K562 (cell line): ENCODE measurements at regions of chr6 and their contacts with region 1.

Region 1: GRCh38 chr6:20056350-20056992 is 155.8 kb downstream of the MBOAT1 start:
- DNase-seq: peak in 3 of 4 experiments; percentile 38 to 71 (median 58)
- ATAC-seq: peak; percentile 81
- H3K4me3 ChIP-seq: no peak overlapping the region
- H3K27ac ChIP-seq: no peak overlapping the region
- H3K4me1 ChIP-seq: no peaks in the 10 kb centered on the region
- H3K27me3 ChIP-seq: peaks cover 26 to 40% of the 10 kb centered on the region in 2 experiments
- CTCF ChIP-seq: peak; percentile 52 to 87 (median 67); a peak in 5 of 6 replicates
- EP300 ChIP-seq: no peak
- POLR2A ChIP-seq: no peak
- RAD21 ChIP-seq: peak; percentile 88 to 95

Region 2: DNA sequence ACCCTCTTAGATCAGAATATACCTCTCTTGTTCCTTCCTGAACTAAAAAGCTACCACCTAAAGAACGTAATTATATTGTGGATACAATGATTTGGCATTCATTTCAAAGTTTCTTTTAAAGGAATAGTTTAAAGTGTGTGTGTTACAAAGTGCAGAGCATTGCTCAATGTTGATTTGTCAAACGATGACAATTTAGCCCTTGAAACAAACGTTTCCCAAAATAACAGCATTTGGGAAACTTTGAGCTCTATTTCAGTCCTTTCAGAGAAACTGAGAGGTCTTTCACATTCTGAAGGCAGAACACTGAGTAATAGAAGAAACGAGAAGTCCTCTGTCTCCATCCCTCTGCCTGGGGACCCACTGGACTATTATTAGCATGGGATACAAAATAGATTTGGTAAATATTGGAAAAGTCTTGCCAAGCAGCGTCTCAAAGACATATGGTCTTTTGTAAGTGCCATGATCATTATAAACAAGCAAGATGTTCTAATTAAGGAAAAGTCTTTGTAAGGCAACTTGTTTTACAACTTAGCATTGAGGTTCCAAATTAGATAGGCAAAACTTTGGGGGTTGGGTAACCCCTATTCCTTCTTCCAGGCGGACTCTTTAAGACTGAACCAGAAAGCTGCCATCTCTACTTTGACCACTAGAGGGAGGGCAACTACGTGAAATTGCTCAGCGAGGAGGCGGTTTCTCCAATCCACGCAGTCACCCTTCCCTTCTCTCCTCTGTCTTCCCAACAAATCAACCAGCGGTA is 1460.5 kb before region 1 on chr6:
- CTCF ChIA-PET with region 1: interaction called, 12 read pairs
- POLR2A ChIA-PET with region 1: no interaction called
- in situ Hi-C with region 1: no loop called
- intact Hi-C with region 1: loop called (anchors 1 kb)
- DNase-seq: peak; percentile 64 to 76 (median 72)
- ATAC-seq: peak; percentile 98
- H3K4me3 ChIP-seq: no peak overlapping the region
- H3K27ac ChIP-seq: no peak overlapping the region
- H3K4me1 ChIP-seq: no peaks in the 10 kb centered on the region
- H3K27me3 ChIP-seq: no peaks in the 10 kb centered on the region
- CTCF ChIP-seq: peak; percentile 77 to 93 (median 92)
- EP300 ChIP-seq: no peak
- POLR2A ChIP-seq: no peak
- RAD21 ChIP-seq: peak; percentile 86 to 91

Region 3: GRCh38 chr6:18823782-18824386 is 1232.6 kb before region 1 on chr6:
- CTCF ChIA-PET with region 1: no interaction called
- POLR2A ChIA-PET with region 1: no interaction called
- in situ Hi-C with region 1: no loop called
- intact Hi-C with region 1: loop called (anchors 10 kb)
- DNase-seq: peak; percentile 37 to 84 (median 59)
- ATAC-seq: peak; percentile 74
- H3K4me3 ChIP-seq: no peak overlapping the region
- H3K27ac ChIP-seq: no peak overlapping the region
- H3K4me1 ChIP-seq: no peaks in the 10 kb centered on the region
- H3K27me3 ChIP-seq: no peaks in the 10 kb centered on the region
- CTCF ChIP-seq: peak; percentile 68 to 76 (median 73)
- EP300 ChIP-seq: no peak
- POLR2A ChIP-seq: no peak
- RAD21 ChIP-seq: peak; percentile 42 to 72

Region 4: GRCh38 chr6:19812512-19813119 is 243.9 kb before region 1 on chr6:
- CTCF ChIA-PET with region 1: no interaction called
- POLR2A ChIA-PET with region 1: no interaction called
- in situ Hi-C with region 1: no loop called
- intact Hi-C with region 1: loop called (anchors 5 kb)
- DNase-seq: peak; percentile 31 to 41 (median 34)
- ATAC-seq: peak; percentile 91
- H3K4me3 ChIP-seq: no peak overlapping the region
- H3K27ac ChIP-seq: no peak overlapping the region
- H3K4me1 ChIP-seq: no peaks in the 10 kb centered on the region
- H3K27me3 ChIP-seq: peaks cover 3 to 6% of the 10 kb centered on the region in 2 experiments; a peak in 4 of 5 replicates
- CTCF ChIP-seq: peak; percentile 56 to 70 (median 62)
- EP300 ChIP-seq: no peak
- POLR2A ChIP-seq: no peak
- RAD21 ChIP-seq: peak; percentile 41 to 52

Region 5: GRCh38 chr6:19866985-19867627 is 189.4 kb before region 1 on chr6:
- CTCF ChIA-PET with region 1: no interaction called
- POLR2A ChIA-PET with region 1: no interaction called
- in situ Hi-C with region 1: no loop called
- intact Hi-C with region 1: loop called (anchors 5 kb)
- DNase-seq: no peak
- ATAC-seq: no peak
- H3K4me3 ChIP-seq: no peak overlapping the region
- H3K27ac ChIP-seq: no peak overlapping the region
- H3K4me1 ChIP-seq: no peaks in the 10 kb centered on the region
- H3K27me3 ChIP-seq: peaks cover 4 to 5% of the 10 kb centered on the region in 2 experiments; a peak in 1 of 5 replicates
- CTCF ChIP-seq: no peak
- EP300 ChIP-seq: no peak
- POLR2A ChIP-seq: no peak
- RAD21 ChIP-seq: no peak

Region 6: DNA sequence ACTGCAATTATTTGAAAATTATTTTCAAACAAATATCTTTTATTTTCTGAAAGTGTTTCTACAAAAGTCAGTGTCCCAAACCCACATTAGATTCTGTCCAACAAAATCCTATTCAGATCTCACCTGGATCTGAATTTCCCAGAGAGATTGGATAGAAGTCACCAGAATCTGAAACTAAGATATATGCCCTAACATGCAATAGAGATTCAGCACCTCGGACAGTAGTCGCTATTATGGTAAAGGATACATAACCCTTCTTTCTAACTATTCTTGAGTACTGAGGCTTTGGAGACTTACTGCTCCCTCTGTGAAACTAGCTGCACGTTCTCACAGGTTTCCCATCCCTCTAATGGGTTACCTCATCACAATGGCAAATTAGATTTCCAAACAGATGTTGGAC is 67.9 kb before region 1 on chr6:
- CTCF ChIA-PET with region 1: no interaction called
- POLR2A ChIA-PET with region 1: no interaction called
- in situ Hi-C with region 1: no loop called
- intact Hi-C with region 1: no loop called
- DNase-seq: peak in 2 of 4 experiments; percentile 23 to 34
- ATAC-seq: peak; percentile 71
- H3K4me3 ChIP-seq: no peak overlapping the region
- H3K27ac ChIP-seq: no peak overlapping the region
- H3K4me1 ChIP-seq: no peaks in the 10 kb centered on the region; a peak in 1 of 5 replicates
- H3K27me3 ChIP-seq: peaks cover 8 to 11% of the 10 kb centered on the region in 2 experiments; a peak in 4 of 5 replicates
- CTCF ChIP-seq: no peak
- EP300 ChIP-seq: no peak
- POLR2A ChIP-seq: no peak
- RAD21 ChIP-seq: no peak

Region 7: DNA sequence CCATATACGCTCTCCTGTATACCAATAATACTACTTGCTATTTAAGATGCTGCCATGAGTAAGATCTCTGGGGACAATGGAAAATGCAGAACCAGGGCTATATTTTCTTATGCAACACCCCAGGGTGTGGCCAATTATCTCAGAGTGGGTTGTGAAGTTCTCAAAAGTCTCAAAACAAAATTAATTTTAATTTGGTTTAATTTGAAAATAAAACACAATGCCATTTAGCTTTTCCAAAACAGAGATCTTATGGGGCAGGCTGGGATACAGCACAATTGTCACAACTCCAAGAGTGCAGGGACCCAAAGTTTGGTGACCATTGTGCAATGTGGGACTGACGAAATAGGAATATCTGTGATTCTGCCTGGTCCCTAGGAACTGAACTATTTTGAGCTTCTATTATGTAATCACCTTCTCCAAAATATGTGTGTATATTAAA is 112.7 kb after region 1 on chr6:
- CTCF ChIA-PET with region 1: no interaction called
- POLR2A ChIA-PET with region 1: no interaction called
- in situ Hi-C with region 1: no loop called
- intact Hi-C with region 1: no loop called
- DNase-seq: no peak
- ATAC-seq: peak; percentile 60
- H3K4me3 ChIP-seq: no peak overlapping the region
- H3K27ac ChIP-seq: no peak overlapping the region
- H3K4me1 ChIP-seq: peaks cover 0 to 17% of the 10 kb centered on the region in 2 experiments; a peak in 4 of 5 replicates
- H3K27me3 ChIP-seq: no peaks in the 10 kb centered on the region
- CTCF ChIP-seq: no peak
- EP300 ChIP-seq: no peak
- POLR2A ChIP-seq: no peak
- RAD21 ChIP-seq: no peak